Endothelial cell of umbilical vein (primary cell): ENCODE measurements at regions of chr2 and their contacts with region 1.

Region 1: DNA sequence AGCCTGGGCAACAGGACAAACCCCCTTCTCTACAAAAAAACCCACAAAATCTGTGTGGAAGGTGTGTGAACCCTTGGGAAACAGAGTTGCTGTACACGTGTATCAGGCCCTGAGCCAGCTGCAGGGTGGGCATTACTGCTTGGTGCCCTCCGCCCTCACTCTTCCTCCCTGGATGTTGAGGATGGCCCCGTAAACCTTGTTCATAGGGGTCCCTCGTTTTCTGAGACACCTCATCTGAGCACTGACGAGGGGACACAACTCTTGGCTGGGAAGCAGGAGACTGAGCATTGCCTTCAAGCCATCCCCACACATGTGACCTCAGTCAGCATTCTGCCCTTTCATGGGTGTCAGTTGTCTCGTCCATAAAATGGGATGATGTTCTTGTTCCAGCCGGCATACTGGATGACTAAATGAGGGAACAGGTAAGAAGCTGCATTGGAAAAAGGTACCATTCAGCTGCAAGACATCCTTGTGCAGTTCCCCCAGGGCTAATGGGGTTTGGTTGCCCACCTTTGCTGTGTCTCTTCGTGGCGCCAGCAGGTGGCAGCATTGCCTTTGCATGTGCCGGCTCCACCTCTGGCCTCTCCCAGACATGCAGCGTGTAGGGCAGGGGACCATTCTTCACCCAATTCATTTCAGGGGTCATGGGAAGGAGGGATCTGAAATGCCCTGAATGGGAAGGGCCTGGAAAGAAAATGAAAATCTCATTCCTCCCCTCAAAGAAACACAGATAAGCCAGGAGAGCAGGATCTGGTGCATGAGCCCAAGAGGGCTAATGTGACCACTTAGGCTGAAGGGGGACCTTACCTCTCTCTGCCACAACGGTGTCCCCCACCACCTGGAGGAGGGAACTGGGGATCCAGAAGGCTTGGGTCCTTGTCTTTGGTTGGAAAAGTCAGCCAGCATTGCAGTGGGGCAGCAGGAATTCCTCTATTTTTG is 36.4 kb upstream of the HAAO start:
- DNase-seq: peak; percentile 66
- H3K4me3 ChIP-seq: no peak overlapping the region
- H3K27ac ChIP-seq: no peak overlapping the region
- H3K4me1 ChIP-seq: no peaks in the 10 kb centered on the region
- H3K27me3 ChIP-seq: no peaks in the 10 kb centered on the region
- CTCF ChIP-seq: peak; percentile 91 to 93
- POLR2A ChIP-seq: no peak

Region 2: DNA sequence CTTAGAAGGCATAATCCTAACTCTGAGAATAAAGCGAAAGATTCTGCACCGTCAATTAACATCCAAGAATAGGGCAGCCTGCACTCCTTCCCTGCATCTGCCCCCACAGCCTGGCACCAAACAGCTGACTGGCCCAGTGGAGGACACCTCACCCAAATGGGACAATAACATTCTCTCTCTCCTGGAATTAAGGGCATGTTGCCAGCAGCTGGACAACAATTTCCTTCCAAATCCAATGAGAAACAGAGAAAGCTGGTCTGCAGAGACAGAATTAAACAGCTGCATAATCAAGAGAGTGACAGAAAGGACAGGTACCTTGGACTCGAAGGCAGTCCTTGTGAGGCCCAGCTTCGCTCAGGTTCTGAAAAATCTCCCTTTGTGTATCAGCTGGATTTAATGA is 482.8 kb before region 1 on chr2:
- CTCF ChIA-PET with region 1: no interaction called
- POLR2A ChIA-PET with region 1: no interaction called
- dilution Hi-C with region 1: no loop called
- intact Hi-C with region 1: no loop called
- DNase-seq: peak; percentile 50
- H3K4me3 ChIP-seq: no peak overlapping the region
- H3K27ac ChIP-seq: no peak overlapping the region
- H3K4me1 ChIP-seq: peaks cover 17% of the 10 kb centered on the region
- H3K27me3 ChIP-seq: no peaks in the 10 kb centered on the region
- CTCF ChIP-seq: no peak
- POLR2A ChIP-seq: no peak

Region 3: GRCh38 chr2:42777883-42778805 is 50.6 kb before region 1 on chr2:
- CTCF ChIA-PET with region 1: no interaction called
- POLR2A ChIA-PET with region 1: no interaction called
- dilution Hi-C with region 1: no loop called
- intact Hi-C with region 1: no loop called
- DNase-seq: no peak
- H3K4me3 ChIP-seq: no peak overlapping the region
- H3K27ac ChIP-seq: no peak overlapping the region
- H3K4me1 ChIP-seq: no peaks in the 10 kb centered on the region
- H3K27me3 ChIP-seq: no peaks in the 10 kb centered on the region
- CTCF ChIP-seq: no peak
- POLR2A ChIP-seq: no peak

Region 4: DNA sequence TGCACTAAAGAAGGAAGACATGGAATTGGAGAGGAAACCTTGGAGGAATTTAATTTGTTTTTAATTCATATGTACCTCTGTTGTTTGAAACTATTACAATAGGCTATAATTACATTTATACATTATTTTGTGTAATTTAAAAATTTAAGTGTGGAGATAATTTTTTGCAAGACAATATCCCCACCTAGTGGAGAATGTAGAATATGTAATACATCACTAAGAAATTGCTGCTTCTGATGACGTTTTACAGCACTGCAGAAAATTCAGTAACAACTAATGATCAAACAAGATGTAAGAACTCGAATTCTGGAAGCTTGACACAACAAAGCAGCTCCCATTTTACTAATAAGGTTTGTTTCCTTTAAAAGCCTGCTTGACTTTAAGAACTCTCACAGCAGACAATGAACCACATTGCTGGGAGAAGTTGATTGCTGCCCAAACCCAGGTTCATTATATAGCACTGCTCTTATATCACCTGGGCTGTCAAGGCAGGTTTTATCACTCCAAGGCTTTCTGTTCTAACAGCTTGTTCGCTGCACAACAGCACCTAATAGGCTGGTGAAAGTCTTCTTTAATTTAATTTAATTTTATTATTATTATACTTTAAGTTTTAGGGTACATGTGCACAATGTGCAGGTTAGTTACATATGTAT is 713.7 kb after region 1 on chr2:
- CTCF ChIA-PET with region 1: interaction called, 4 read pairs
- POLR2A ChIA-PET with region 1: no interaction called
- dilution Hi-C with region 1: no loop called
- intact Hi-C with region 1: loop called (anchors 1 kb)
- DNase-seq: peak; percentile 66
- H3K4me3 ChIP-seq: no peak overlapping the region
- H3K27ac ChIP-seq: no peak overlapping the region
- H3K4me1 ChIP-seq: no peaks in the 10 kb centered on the region
- H3K27me3 ChIP-seq: no peaks in the 10 kb centered on the region
- CTCF ChIP-seq: peak in 1 of 2 donors; percentile 17
- POLR2A ChIP-seq: no peak